ENCODE measurements at regions of chr17 and their contacts with region 1.

Region 1: DNA sequence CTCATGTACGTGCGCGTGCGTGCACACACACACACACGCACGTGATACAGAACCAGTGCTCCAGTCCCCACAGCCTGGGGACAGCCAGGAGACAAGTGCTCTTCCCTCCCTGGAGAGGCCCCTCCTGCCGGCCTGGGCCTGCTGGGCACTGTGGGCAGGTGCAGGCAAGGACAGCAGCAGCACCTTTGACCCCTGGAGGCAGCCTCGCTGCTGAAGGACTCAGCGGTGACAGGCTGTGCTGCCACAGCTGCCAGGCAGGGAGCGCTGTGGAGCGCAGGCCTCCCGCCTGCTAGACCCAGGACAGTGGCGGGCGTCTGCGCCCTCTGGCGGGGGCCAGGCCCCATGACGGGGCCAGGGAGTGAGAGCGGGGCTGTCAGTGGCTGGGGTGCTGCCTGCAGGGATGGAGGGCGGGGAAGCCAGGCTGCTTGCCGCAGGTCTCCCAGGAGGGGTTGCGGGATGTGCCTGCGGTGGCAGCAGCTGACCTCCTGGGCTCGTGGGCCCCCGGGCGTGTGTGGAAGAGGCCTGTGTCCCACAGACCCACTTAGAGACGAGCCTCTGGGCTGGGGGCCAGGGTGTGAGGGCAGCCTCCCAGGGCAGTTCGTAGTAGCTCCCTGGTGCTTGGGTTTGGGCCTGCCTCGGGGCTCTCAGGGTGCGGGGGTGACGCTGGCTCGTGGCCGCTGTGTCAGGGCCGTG is 63.5 kb upstream of the PVALEF start:
- DNase-seq: peak; percentile 90
- H3K4me3 Mint-ChIP-seq: no peak overlapping the region
- H3K27ac Mint-ChIP-seq: no peak overlapping the region
- H3K4me1 Mint-ChIP-seq: peaks cover 2% of the 10 kb centered on the region
- H3K27me3 Mint-ChIP-seq: peaks cover 4% of the 10 kb centered on the region

Region 2: DNA sequence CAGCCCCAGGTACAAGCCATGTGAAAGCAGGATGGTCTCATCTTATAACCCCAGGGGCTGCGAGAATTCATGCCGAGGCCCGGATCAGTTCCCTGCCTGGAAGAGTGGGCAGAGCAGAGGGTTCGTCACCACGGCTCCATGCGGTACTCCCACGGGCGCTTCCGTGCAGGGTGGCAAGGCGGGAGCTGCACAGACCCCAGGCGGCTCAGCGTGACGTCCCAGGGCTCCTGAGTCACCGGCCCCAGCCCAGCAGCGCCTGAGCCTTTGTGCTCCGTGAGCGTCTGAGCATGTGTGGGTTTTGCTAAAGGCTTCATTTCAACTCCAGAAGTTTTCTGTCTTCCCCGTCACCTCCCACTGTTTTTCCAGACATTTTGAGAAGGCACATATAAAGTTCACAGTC is 181.3 kb before region 1 on chr17:
- CTCF ChIA-PET with region 1: no interaction called
- POLR2A ChIA-PET with region 1: no interaction called
- DNase-seq: no peak
- H3K4me3 Mint-ChIP-seq: no peak overlapping the region
- H3K27ac Mint-ChIP-seq: no peak overlapping the region
- H3K4me1 Mint-ChIP-seq: no peaks in the 10 kb centered on the region
- H3K27me3 Mint-ChIP-seq: no peaks in the 10 kb centered on the region

Region 3: GRCh38 chr17:80991645-80992076 is 110.1 kb before region 1 on chr17 and contains the start of gene CHMP6:
- CTCF ChIA-PET with region 1: interaction called, 15 read pairs
- POLR2A ChIA-PET with region 1: no interaction called
- DNase-seq: peak; percentile 73
- H3K4me3 Mint-ChIP-seq: peak within 1 kb of the TSS; percentile 74
- H3K27ac Mint-ChIP-seq: peak within 1 kb of the TSS; percentile 58
- H3K4me1 Mint-ChIP-seq: peaks cover 26% of the 10 kb centered on the region
- H3K27me3 Mint-ChIP-seq: peaks cover 2% of the 10 kb centered on the region
- total RNA-seq, gene CHMP6: 30.3 to 31.6 TPM

Region 4: GRCh38 chr17:81025065-81025740 is 76.6 kb before region 1 on chr17:
- CTCF ChIA-PET with region 1: interaction called, 20 read pairs
- POLR2A ChIA-PET with region 1: no interaction called
- DNase-seq: no peak
- H3K4me3 Mint-ChIP-seq: no peak overlapping the region
- H3K27ac Mint-ChIP-seq: no peak overlapping the region
- H3K4me1 Mint-ChIP-seq: peaks cover 16% of the 10 kb centered on the region
- H3K27me3 Mint-ChIP-seq: peaks cover 22% of the 10 kb centered on the region